ENCODE measurements at regions of chr2 and their contacts with region 1.

Region 1: DNA sequence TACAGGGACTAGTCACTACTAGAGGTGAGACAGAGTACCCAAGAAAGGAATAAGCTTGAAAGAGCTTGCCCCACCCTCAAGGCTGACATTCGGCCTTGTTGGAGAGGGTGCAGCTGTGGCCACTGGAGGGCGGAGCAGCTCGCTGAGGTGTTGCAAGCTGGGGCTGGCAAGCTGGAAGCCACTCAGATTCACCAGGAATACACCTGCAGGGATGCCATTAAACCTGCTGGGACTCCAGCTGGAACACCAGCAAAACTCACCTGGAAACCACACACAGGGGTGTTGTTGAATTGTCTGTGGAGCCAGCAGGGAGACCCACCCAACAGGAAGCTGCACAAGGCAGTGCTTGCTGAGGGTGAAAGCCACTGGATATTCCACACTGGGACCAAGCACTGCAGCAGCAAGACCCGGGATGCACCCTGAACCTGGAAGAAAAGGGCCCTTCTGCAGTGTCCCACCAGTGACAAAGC is 26.1 kb downstream of the KCTD18 start:
- DNase-seq: peak; percentile 34
- H3K4me3 ChIP-seq: no peak overlapping the region
- H3K27ac ChIP-seq: no peak overlapping the region
- H3K4me1 ChIP-seq: peaks cover 20 to 25% of the 10 kb centered on the region in 2 experiments
- H3K27me3 ChIP-seq: no peaks in the 10 kb centered on the region
- CTCF ChIP-seq: peak; percentile 34
- EP300 ChIP-seq: no peak
- RAD21 ChIP-seq: peak; percentile 30

Region 2: DNA sequence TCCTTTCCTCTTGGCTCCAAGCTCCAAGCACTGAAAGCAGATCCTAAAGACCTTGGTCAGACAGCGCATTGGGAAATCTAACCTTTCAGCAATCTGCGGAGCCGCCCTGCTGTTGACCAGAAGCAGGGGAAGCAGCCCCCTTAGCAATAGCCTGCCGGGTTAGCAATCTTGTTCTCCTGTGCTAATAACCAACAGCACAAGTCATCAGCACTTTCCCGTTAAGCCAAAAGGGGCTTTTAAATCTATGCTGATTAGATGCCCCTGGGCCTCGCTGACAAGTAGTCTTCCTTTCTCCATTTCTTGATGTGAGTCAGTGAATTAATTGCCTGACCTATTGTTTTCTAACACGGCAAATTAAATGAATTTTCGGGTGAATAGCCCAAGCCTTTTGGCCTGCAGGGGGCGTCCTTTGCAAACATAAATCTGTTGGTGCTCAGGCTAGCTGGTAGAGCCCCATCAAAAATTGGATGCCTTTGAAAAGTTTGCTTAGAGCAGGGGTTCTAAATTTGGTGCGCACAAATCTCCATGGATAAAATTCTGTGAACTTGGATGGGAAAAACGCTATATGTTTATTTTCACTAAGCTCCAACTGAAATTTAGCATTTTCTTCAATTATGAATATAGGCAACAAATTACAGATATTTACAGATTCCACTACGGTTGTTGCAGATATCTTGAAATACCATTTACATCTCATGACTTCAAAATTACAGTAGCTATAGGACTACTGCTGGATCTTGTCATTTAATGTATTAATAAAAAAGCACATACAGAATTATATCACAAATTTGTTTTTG is 503.7 kb before region 1 on chr2:
- CTCF ChIA-PET with region 1: interaction called, 96 read pairs
- POLR2A ChIA-PET with region 1: no interaction called
- DNase-seq: peak; percentile 52
- H3K4me3 ChIP-seq: peak overlapping the region; percentile 12 to 13; a peak in 2 of 4 replicates
- H3K27ac ChIP-seq: no peak overlapping the region
- H3K4me1 ChIP-seq: peaks cover 8% of the 10 kb centered on the region in 2 experiments; a peak in 3 of 4 replicates
- H3K27me3 ChIP-seq: no peaks in the 10 kb centered on the region
- CTCF ChIP-seq: peak; percentile 98
- EP300 ChIP-seq: 0 out of 4 replicates have a peak, but pooled peaks of 1 of the 2 experiments have one; percentile 3
- RAD21 ChIP-seq: peak; percentile 93

Region 3: GRCh38 chr2:200359552-200359951 is 124.2 kb before region 1 on chr2:
- CTCF ChIA-PET with region 1: interaction called, 10 read pairs
- POLR2A ChIA-PET with region 1: no interaction called
- DNase-seq: no peak
- H3K4me3 ChIP-seq: no peak overlapping the region
- H3K27ac ChIP-seq: no peak overlapping the region
- H3K4me1 ChIP-seq: peaks cover 11 to 19% of the 10 kb centered on the region in 2 experiments; a peak in 2 of 4 replicates
- H3K27me3 ChIP-seq: no peaks in the 10 kb centered on the region
- CTCF ChIP-seq: no peak
- EP300 ChIP-seq: no peak
- RAD21 ChIP-seq: no peak

Region 4: GRCh38 chr2:200498402-200499162 is 14.8 kb after region 1 on chr2:
- CTCF ChIA-PET with region 1: interaction called, 12 read pairs
- POLR2A ChIA-PET with region 1: no interaction called
- DNase-seq: no peak
- H3K4me3 ChIP-seq: no peak overlapping the region
- H3K27ac ChIP-seq: no peak overlapping the region; a peak in 1 of 4 replicates
- H3K4me1 ChIP-seq: no peaks in the 10 kb centered on the region
- H3K27me3 ChIP-seq: no peaks in the 10 kb centered on the region
- CTCF ChIP-seq: no peak
- EP300 ChIP-seq: no peak
- RAD21 ChIP-seq: no peak

Measured in SK-N-SH (cell line).